ENCODE measurements at regions of chr12 and their contacts with region 1.

Region 1: GRCh38 chr12:112937741-112938719 is at the start of gene OAS3:
- DNase-seq: peak; percentile 87
- ATAC-seq: peak; percentile 85
- H3K4me3 ChIP-seq: peak within 1 kb of the TSS; percentile 84
- H3K27ac ChIP-seq: peak within 1 kb of the TSS; percentile 12
- H3K4me1 ChIP-seq: peaks cover 17% of the 10 kb centered on the region
- H3K27me3 ChIP-seq: no peaks in the 10 kb centered on the region
- CTCF ChIP-seq: 0 out of 2 replicates have a peak, but pooled peaks have one; percentile 14
- total RNA-seq, gene OAS3: 25.5 and 28.8 TPM in 2 replicates

Region 2: DNA sequence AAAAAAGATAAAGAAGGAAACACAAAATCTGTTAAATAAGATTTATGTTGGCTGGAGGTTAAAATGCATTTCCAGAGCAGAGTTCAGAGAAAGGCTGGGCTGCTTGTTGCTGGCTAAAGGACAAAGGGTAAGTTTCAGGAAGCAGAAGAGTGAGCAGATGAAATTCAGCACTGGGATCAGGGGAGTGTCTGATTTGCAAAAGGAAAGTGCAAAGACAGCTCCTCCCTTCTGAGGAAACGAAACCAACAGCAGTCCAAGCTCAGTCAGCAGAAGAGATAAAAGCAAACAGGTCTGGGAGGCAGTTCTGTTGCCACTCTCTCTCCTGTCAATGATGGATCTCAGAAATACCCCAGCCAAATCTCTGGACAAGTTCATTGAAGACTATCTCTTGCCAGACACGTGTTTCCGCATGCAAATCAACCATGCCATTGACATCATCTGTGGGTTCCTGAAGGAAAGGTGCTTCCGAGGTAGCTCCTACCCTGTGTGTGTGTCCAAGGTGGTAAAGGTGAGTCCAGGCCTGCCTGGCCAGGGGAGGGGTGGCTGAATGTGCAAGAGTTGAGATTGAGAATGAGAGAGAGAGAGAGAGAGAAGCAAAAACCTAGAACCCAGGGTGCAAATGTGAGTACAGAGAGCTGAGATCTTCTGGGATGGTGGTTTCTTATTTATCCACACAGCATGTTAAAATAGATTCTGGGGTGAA is 31.2 kb before region 1 on chr12 and contains the start of gene OAS1:
- CTCF ChIA-PET with region 1: no interaction called
- POLR2A ChIA-PET with region 1: no interaction called
- intact Hi-C with region 1: loop called (anchors 1 kb)
- DNase-seq: peak; percentile 70
- ATAC-seq: peak; percentile 76
- H3K4me3 ChIP-seq: peak within 1 kb of the TSS; percentile 63
- H3K27ac ChIP-seq: peak within 1 kb of the TSS; percentile 58
- H3K4me1 ChIP-seq: peaks cover 49% of the 10 kb centered on the region
- H3K27me3 ChIP-seq: no peaks in the 10 kb centered on the region
- CTCF ChIP-seq: no peak
- total RNA-seq, gene OAS1: 10.1 and 10.2 TPM in 2 replicates

Region 3: GRCh38 chr12:112978163-112979040 is 40.4 kb after region 1 on chr12 and contains the start of gene OAS2:
- CTCF ChIA-PET with region 1: interaction called, 3 read pairs
- POLR2A ChIA-PET with region 1: interaction called, 12 read pairs
- intact Hi-C with region 1: loop called (anchors 5 kb)
- DNase-seq: peak; percentile 78
- ATAC-seq: peak; percentile 95
- H3K4me3 ChIP-seq: peak within 1 kb of the TSS; percentile 64
- H3K27ac ChIP-seq: peak within 1 kb of the TSS; percentile 11; the same call in 1 of the 2 replicates
- H3K4me1 ChIP-seq: peaks cover 14% of the 10 kb centered on the region
- H3K27me3 ChIP-seq: no peaks in the 10 kb centered on the region
- CTCF ChIP-seq: no peak
- total RNA-seq, gene OAS2: 5.8 and 10.5 TPM in 2 replicates

Region 4: DNA sequence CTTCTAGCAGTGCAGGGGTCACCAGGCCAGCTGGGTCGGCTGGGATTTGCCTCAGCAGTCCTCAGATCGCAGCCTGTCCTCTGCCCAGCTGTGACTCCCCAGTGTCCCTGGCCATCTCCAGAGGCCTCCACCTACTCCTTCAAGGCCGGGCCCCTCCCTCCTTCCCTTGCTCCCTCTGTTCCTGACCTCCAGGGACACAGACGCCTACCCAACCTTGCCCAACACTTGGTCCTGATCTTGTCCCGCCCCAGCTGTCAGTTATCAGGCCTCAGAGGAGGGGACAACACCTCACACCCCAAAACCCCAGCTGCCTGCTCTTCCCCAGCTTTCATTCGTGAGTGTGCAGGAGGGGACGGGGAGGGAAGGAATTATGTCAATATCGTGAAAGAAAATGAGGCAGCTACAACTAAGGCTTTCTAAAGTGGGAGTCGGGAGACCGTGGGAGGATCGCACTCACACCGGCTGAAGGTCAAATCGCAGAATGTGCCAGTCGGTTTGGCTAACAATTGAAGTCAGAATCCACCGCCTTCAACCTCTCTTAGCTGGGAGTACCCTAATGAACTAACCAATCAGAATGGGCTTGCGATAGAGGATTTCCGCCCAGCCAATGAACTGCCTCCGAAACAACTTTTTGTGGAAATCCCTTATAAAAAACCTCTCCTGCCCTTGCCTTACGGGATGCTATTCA is 411.0 kb after region 1 on chr12:
- CTCF ChIA-PET with region 1: no interaction called
- POLR2A ChIA-PET with region 1: no interaction called
- intact Hi-C with region 1: no loop called
- DNase-seq: no peak
- ATAC-seq: no peak
- H3K4me3 ChIP-seq: no peak overlapping the region
- H3K27ac ChIP-seq: no peak overlapping the region
- H3K4me1 ChIP-seq: no peaks in the 10 kb centered on the region
- H3K27me3 ChIP-seq: no peaks in the 10 kb centered on the region
- CTCF ChIP-seq: no peak